AG04450 (cell line): ENCODE measurements at regions of chr11 and their contacts with region 1.

Region 1: DNA sequence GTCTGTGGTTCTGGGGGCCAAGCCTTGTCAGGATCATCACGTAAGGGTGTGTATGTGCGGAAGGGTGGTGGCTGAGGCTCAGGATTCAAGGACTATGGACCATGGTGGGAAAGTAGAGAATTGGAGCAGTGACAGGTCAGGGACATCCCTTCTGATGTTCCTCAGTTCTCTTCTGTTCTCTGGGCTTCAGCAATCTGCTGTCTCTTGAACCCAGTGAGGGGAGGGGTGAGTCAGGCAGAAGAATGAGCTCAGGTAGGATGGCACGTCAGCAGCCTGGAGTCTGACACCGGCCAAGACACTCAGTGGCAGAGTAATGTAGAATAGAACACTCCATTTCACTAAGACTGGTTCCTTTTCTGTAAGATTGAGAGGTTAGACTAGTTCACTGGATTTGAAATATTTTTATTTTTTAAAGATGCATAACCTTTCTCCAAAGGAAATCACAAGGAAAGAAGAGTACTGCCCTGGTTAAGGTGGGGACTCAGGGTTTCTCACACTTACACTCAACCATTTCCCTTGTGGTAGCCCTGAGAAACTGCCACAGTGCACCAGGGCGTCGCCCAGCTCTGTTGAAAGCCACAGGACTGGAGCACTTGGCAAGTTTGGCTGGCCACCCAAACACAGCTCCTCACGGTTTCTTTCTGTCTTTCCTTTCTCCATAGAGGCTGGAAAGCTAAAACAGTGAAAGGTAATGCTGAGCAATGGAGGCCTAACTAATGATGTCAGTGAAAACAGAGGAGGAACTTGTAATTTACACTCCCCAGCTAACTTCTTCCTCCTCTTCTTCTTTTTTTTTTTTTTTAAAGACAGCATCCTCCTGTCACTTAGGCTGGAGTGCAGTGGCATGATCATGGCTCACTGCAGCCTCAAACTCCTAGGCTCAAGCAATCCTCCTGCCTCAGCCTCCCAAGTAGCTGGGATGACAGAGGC is 23.1 kb upstream of the MICAL2 start:
- DNase-seq: no peak
- H3K4me3 ChIP-seq: peak overlapping the region; percentile 50
- H3K27ac ChIP-seq: peak overlapping the region; percentile 100
- H3K27me3 ChIP-seq: no peaks in the 10 kb centered on the region
- CTCF ChIP-seq: no peak; the same call in 1 of the 2 replicates

Region 2: DNA sequence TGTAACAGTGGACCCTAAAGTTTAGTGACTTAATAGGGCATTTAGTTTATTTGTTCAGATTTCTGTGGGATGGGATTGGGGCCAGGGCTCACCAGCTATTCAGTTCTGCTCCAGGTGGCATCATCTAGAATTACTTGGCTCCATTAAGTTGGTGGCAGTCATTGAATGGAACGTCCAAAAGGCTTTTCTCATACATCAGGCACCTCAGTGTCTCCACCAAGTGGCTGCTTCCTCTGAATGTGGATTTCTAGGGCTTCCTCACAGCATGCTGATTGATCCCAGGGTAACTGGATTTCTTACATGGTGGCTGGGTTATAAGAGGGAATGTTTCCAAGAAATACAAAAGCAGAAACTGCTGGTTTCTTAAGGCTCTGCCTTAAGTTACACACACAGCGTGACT is 210.9 kb before region 1 on chr11:
- CTCF ChIA-PET with region 1: no interaction called
- POLR2A ChIA-PET with region 1: no interaction called
- DNase-seq: no peak
- H3K4me3 ChIP-seq: no peak overlapping the region
- H3K27ac ChIP-seq: no peak overlapping the region
- H3K27me3 ChIP-seq: no peaks in the 10 kb centered on the region
- CTCF ChIP-seq: no peak

Region 3: GRCh38 chr11:12066799-12067508 is 20.4 kb before region 1 on chr11:
- CTCF ChIA-PET with region 1: interaction called, 3 read pairs
- POLR2A ChIA-PET with region 1: interaction called, 14 read pairs
- DNase-seq: no peak
- H3K4me3 ChIP-seq: no peak overlapping the region
- H3K27ac ChIP-seq: peak overlapping the region; percentile 96
- H3K27me3 ChIP-seq: no peaks in the 10 kb centered on the region
- CTCF ChIP-seq: no peak

Region 4: DNA sequence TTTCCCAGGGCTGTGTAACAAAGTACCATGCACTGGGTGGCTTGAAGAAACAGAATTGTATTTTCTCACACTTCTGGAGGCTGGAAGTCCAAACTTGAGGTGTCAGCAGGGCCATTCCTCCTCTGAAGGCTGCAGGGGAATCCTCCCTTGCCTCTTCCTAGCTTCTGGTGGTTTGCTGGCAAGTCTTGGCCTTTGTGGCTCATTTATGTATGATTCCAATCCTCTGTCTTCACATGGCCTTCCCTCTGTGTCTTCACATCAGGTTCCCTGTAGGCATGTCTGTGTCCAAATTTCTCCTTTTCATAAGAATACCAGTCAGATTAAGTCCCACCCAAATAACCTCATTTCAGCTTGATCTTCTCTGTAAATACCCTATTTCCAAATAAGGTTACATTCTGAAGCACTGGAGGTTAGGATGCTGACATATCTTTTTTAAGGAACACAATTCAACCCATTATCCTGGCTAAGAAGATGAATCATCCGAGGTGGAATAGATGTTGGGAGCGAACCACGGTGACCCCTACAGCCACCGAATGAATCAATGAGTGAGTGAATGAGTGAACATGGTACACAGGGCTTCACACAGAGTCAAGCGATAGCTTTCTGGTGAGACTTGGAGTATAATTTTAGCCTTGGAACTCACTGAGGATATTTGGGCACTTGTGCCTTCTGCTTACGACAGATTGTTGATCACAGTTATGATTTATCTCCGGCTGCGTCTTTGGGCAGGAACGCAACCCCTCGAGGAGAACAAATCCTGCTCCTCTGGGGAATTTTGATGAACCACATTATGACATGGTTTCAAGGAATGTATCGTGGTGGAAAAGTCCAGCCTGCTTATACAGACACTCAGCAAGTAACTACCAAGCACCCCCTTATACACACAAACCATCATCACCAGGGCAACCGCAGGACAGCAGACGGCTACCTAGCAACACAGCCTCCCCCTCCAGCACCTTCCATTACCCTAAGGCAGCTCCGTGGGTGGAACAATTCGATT is 11.2 kb before region 1 on chr11:
- CTCF ChIA-PET with region 1: interaction called, 4 read pairs
- POLR2A ChIA-PET with region 1: interaction called, 14 read pairs
- DNase-seq: peak; percentile 98
- H3K4me3 ChIP-seq: no peak overlapping the region; the same call in 1 of the 2 replicates
- H3K27ac ChIP-seq: peak overlapping the region; percentile 99
- H3K27me3 ChIP-seq: no peaks in the 10 kb centered on the region
- CTCF ChIP-seq: no peak

Region 5: DNA sequence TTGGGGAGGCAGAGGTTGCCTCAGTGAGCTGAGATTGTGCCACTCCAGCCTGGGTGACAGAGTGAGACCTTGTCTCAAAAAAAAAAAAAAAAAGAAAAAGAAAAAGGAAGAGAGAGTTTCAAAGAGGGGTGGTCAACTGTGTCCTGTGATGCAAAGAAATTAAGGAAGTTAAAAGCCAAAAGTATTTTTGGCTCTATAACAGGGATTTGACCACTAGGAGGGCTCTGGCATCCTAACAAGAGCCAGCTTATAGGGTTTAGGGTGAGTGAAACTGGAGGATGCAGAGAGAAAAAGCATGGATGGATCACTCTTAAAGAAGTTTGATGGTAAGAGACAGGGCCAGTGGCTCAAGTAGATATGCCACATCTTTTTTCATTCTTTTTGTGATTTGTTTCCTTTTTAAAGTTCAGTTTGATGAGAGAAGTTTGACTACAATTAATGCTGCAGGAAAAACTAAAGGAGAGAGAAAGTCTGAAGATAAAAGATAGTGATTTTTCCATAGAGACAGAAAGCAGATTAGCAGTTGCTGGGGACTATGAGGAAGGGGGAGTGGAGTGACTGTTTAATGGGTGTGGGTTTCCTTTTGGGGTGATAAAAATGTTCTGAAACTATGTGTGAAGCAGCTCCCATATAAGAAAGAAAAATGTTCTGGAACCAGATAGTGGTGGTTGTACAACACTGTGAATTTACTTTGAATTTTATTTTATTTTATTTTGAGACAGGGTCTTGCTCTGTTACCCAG is 12.0 kb after region 1 on chr11:
- CTCF ChIA-PET with region 1: interaction called, 10 read pairs
- POLR2A ChIA-PET with region 1: interaction called, 3 read pairs
- DNase-seq: no peak
- H3K4me3 ChIP-seq: no peak overlapping the region
- H3K27ac ChIP-seq: no peak overlapping the region
- H3K27me3 ChIP-seq: no peaks in the 10 kb centered on the region
- CTCF ChIP-seq: peak; percentile 38

Region 6: GRCh38 chr11:12110201-12110713 is 22.9 kb after region 1 on chr11 and contains the start of gene MICAL2:
- CTCF ChIA-PET with region 1: no interaction called
- POLR2A ChIA-PET with region 1: interaction called, 16 read pairs
- DNase-seq: peak; percentile 57
- H3K4me3 ChIP-seq: peak within 1 kb of the TSS; percentile 94
- H3K27ac ChIP-seq: peak within 1 kb of the TSS; percentile 57
- H3K27me3 ChIP-seq: no peaks in the 10 kb centered on the region
- CTCF ChIP-seq: no peak
- polyA plus RNA-seq, gene MICAL2: 171 and 222 TPM in 2 replicates

Region 7: DNA sequence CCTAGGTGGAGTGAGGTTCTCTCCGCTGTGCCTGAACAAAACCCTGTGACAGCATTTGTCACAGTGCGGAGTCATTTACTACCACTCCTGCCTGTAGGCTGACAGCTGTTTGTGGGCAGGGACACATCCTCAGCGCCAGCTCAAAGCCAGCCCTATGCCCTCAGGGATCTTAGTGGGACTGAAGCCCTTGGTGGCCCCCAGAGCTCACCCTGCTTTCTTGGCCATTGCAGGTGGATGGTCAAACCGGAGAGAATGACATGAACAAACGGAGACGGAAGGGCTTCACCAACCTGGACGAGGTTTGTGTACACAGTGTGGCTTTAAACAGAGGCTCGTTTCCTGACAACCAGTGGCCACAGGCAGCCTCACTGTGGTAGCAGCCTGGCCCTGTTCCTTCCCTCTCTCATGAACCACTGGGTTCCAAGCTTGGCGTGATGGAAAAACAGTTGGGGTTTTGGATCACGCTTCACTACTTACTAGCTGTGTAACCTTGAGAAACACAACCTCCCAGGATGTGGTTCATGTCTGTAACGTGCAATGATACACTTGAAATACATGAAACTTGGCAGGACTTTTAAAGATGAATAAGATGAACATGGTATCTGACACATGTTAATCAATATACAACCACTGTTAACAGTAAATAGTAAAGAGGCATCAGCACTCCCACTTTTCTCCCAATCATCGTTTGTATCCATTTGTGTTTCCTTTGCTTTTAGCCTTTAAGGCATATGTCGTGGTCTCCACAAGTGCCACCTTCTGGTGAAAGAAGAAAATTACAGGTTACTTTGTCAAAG is 148.8 kb after region 1 on chr11:
- CTCF ChIA-PET with region 1: interaction called, 26 read pairs
- POLR2A ChIA-PET with region 1: no interaction called
- DNase-seq: peak; percentile 43
- H3K4me3 ChIP-seq: no peak overlapping the region
- H3K27ac ChIP-seq: peak overlapping the region; percentile 65
- H3K27me3 ChIP-seq: no peaks in the 10 kb centered on the region
- CTCF ChIP-seq: peak; percentile 70